ENCODE measurements at regions of chr14 and their contacts with region 1.

Region 1: GRCh38 chr14:38065106-38065762 is 142.5 kb upstream of the SSTR1 start:
- DNase-seq: peak; percentile 8 to 90 (median 84)
- ATAC-seq: peak; percentile 98
- H3K4me3 ChIP-seq: peak overlapping the region; percentile 43
- H3K4me3 Mint-ChIP-seq: peak overlapping the region; percentile 62 to 84 (median 74)
- H3K27ac ChIP-seq: peak overlapping the region; percentile 89
- H3K27ac Mint-ChIP-seq: peak overlapping the region; percentile 88 to 98 (median 96)
- H3K4me1 ChIP-seq: peaks cover 12 to 17% of the 10 kb centered on the region in 2 donors
- H3K4me1 Mint-ChIP-seq: peaks cover 14 to 62% (median 44%) of the 10 kb centered on the region in 7 donors
- H3K27me3 ChIP-seq: no peaks in the 10 kb centered on the region
- H3K27me3 Mint-ChIP-seq: peaks cover 0 to 4% (median 0%) of the 10 kb centered on the region in 5 donors

Region 2: GRCh38 chr14:38079268-38079667 is 14.0 kb after region 1 on chr14:
- CTCF ChIA-PET with region 1: interaction called, 3 read pairs
- POLR2A ChIA-PET with region 1: interaction called, 7 read pairs
- intact Hi-C with region 1: loop called (anchors 1 kb)
- DNase-seq: no peak
- ATAC-seq: no peak
- H3K4me3 ChIP-seq: peak overlapping the region; percentile 31
- H3K4me3 Mint-ChIP-seq: peak overlapping the region in 8 of 10 donors; percentile 58 to 86 (median 74)
- H3K27ac ChIP-seq: peak overlapping the region; percentile 54
- H3K27ac Mint-ChIP-seq: peak overlapping the region in 8 of 9 donors; percentile 88 to 98 (median 92)
- H3K4me1 ChIP-seq: peaks cover 40 to 64% of the 10 kb centered on the region in 2 donors
- H3K4me1 Mint-ChIP-seq: peaks cover 19 to 82% (median 70%) of the 10 kb centered on the region in 7 donors
- H3K27me3 ChIP-seq: no peaks in the 10 kb centered on the region
- H3K27me3 Mint-ChIP-seq: no peaks in the 10 kb centered on the region

Region 3: GRCh38 chr14:38125481-38126037 is 60.3 kb after region 1 on chr14:
- CTCF ChIA-PET with region 1: no interaction called
- POLR2A ChIA-PET with region 1: interaction called, 5 read pairs
- intact Hi-C with region 1: loop called in 1 of 2 experiments (anchors 1 kb)
- DNase-seq: peak in 6 of 9 donors; percentile 5 to 33 (median 26)
- ATAC-seq: peak; percentile 61
- H3K4me3 ChIP-seq: no peak overlapping the region
- H3K4me3 Mint-ChIP-seq: peak overlapping the region in 6 of 10 donors; percentile 6 to 40 (median 19)
- H3K27ac ChIP-seq: no peak overlapping the region
- H3K27ac Mint-ChIP-seq: peak overlapping the region in 7 of 9 donors; percentile 35 to 89 (median 77)
- H3K4me1 ChIP-seq: peaks cover 4 to 35% of the 10 kb centered on the region in 2 donors
- H3K4me1 Mint-ChIP-seq: peaks cover 12 to 76% (median 47%) of the 10 kb centered on the region in 7 donors
- H3K27me3 ChIP-seq: no peaks in the 10 kb centered on the region
- H3K27me3 Mint-ChIP-seq: no peaks in the 10 kb centered on the region

Region 4: GRCh38 chr14:38197001-38197783 is 132.0 kb after region 1 on chr14:
- CTCF ChIA-PET with region 1: interaction called, 3 read pairs
- POLR2A ChIA-PET with region 1: no interaction called
- intact Hi-C with region 1: loop called in 1 of 2 experiments (anchors 2 kb)
- DNase-seq: peak in 5 of 9 donors; percentile 23 to 49 (median 35)
- ATAC-seq: no peak
- H3K4me3 ChIP-seq: no peak overlapping the region
- H3K4me3 Mint-ChIP-seq: no peak overlapping the region
- H3K27ac ChIP-seq: no peak overlapping the region
- H3K27ac Mint-ChIP-seq: peak overlapping the region in 1 of 9 donors; percentile 60
- H3K4me1 ChIP-seq: peaks cover 0 to 4% of the 10 kb centered on the region in 2 donors
- H3K4me1 Mint-ChIP-seq: peaks cover 0 to 8% (median 5%) of the 10 kb centered on the region in 7 donors
- H3K27me3 ChIP-seq: no peaks in the 10 kb centered on the region
- H3K27me3 Mint-ChIP-seq: peaks cover 0 to 2% (median 0%) of the 10 kb centered on the region in 5 donors